ENCODE measurements at regions of chr5 and their contacts with region 1.

Region 1: DNA sequence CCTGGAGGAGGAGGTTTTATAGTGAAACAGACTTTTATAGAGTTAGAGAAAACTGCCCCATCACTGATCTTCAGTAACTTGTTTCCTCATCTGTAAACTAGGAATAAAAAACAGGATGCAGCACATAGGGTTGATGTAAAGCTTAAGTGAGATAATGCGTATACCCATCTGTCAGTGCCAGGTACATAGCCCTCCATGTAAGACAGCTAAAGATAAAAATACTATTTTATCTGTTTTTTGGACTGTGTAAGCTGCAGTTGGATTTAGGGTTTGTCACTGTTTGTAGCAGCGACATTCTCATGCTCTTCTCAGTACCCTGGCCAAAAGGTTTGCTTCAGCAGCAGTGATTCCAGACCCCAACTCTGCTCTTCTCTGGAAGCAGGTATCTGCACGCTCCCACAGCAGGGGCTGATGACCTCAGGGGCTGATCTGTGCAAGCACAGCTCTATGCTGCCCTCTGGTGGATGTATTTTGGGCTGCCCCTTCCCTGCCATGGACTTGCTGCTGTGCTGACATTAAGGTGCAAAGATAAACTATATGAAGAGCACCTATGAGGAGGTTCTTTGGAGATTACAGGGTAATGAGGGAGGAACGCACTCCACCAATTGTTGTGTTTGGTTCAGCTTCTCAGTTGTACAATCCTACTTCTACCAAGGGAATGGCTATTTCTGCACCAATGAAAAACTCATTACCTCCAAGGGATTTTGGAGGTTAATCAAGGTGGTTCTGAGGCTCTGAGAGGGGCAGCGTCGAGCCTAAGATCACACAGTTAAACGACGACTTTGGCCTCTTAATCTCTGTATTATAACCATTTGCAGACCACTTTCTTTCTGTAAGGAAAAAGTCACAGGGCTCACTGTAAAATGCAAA is 13.1 kb downstream of the HMHB1 start:
- DNase-seq: peak; percentile 71
- H3K4me3 ChIP-seq: peak overlapping the region in 1 of 2 experiments; percentile 12; a peak in 1 of 4 replicates
- H3K27ac ChIP-seq: no peak overlapping the region
- H3K4me1 ChIP-seq: peaks cover 0 to 19% of the 10 kb centered on the region in 2 experiments; a peak in 3 of 4 replicates
- H3K27me3 ChIP-seq: no peaks in the 10 kb centered on the region
- CTCF ChIP-seq: peak; percentile 94
- EP300 ChIP-seq: no peak
- RAD21 ChIP-seq: peak; percentile 96

Region 2: GRCh38 chr5:142922223-142922952 is 902.7 kb before region 1 on chr5:
- CTCF ChIA-PET with region 1: interaction called, 26 read pairs
- POLR2A ChIA-PET with region 1: no interaction called
- DNase-seq: peak; percentile 51
- H3K4me3 ChIP-seq: no peak overlapping the region
- H3K27ac ChIP-seq: no peak overlapping the region
- H3K4me1 ChIP-seq: peaks cover 3 to 11% of the 10 kb centered on the region in 2 experiments
- H3K27me3 ChIP-seq: no peaks in the 10 kb centered on the region
- CTCF ChIP-seq: peak; percentile 66
- EP300 ChIP-seq: no peak
- RAD21 ChIP-seq: peak; percentile 79

Region 3: DNA sequence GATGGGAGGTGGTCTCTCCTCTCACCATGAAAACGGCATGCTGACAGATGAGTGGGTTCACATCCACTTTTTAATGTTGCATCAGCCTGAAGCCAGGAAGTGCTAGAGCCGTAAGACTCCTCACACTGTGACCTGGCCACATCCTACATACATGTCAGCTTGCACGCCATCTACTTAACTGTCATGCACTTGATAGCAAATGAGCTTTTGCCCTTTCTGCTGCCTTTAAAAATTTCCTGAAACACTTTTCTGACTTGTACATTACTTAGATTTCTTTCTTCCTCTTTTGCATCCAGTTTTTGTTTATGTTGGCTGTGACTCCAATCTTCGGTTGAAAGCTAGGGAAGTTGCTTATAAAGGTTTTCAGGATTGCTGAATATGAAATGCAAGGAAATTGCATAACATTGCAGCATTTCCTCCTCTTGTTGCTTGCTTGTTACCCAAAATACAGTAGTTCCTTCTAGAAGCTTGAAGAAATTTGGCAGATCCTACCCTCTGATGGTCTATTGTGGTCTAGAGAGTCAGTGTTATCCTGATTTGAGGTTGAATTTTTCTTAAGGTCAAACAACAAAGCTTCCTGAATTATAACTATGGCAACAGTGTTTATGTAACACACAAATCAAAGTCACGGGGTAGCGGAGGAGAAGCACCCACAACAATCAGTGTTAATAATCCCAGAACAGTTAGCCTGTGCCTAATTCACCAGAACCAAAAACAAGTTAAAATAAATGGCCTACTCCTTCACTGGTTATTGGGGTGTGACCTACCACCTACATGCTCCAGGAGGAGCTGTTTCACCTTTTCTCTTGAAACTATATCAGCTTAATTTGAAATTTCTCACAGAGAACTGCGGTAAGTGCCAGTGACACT is 822.4 kb before region 1 on chr5:
- CTCF ChIA-PET with region 1: interaction called, 12 read pairs
- POLR2A ChIA-PET with region 1: no interaction called
- DNase-seq: no peak
- H3K4me3 ChIP-seq: no peak overlapping the region; a peak in 1 of 4 replicates
- H3K27ac ChIP-seq: peak overlapping the region; percentile 16 to 78; a peak in 3 of 4 replicates
- H3K4me1 ChIP-seq: peaks cover 0 to 20% of the 10 kb centered on the region in 2 experiments; a peak in 3 of 4 replicates
- H3K27me3 ChIP-seq: no peaks in the 10 kb centered on the region
- CTCF ChIP-seq: peak; percentile 68
- EP300 ChIP-seq: no peak
- RAD21 ChIP-seq: peak; percentile 63

Region 4: DNA sequence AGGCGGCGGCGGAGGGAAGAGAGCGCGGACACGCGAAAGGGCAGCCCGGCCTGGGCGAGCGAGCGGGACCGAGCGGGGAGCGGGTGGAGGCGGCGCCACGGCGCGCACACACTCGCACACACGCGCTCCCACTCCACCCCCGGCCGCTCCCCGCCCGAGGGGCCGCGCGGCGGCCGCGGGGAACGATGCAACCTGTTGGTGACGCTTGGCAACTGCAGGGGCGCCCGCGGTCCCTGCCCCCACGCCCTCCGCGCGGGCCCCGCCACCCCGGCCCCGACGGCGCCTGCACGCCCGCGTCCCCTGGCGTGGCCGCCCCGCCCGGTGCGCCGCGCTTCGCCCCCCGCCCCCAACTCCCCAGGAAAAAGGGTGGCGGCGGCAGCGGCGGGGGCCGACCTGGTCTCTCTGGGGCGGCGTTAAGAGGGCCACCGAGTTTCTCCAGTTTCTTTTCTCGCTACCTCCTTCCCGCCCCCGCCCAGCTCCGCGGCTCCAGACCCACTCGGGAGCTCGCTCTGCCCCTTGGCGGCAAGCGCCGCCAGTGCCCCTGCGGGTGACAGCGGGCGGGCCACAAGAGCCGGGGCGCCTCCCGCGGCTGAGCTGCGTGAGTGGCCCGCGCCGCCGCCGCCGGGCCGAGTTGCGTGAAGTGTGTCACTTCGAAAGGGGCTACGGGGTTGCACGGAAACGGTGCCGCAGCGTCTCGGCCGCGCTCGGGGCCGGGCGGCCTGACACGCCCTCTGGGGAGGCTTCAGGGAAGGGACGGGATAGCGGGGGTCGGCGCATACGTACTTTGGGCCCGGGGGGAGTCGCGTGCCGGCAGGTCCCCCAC is 421.3 kb before region 1 on chr5 and contains the start of gene NR3C1:
- CTCF ChIA-PET with region 1: interaction called, 32 read pairs
- POLR2A ChIA-PET with region 1: no interaction called
- DNase-seq: peak; percentile 88
- H3K4me3 ChIP-seq: peak within 1 kb of the TSS; percentile 83 to 90
- H3K27ac ChIP-seq: peak within 1 kb of the TSS; percentile 94 to 99
- H3K4me1 ChIP-seq: peaks cover 9 to 19% of the 10 kb centered on the region in 2 experiments; a peak in 3 of 4 replicates
- H3K27me3 ChIP-seq: no peaks in the 10 kb centered on the region
- CTCF ChIP-seq: peak; percentile 46
- EP300 ChIP-seq: no peak
- RAD21 ChIP-seq: peak; percentile 56
- polyA plus RNA-seq, gene NR3C1: 7.1 and 8.2 TPM in 2 replicates

Region 5: DNA sequence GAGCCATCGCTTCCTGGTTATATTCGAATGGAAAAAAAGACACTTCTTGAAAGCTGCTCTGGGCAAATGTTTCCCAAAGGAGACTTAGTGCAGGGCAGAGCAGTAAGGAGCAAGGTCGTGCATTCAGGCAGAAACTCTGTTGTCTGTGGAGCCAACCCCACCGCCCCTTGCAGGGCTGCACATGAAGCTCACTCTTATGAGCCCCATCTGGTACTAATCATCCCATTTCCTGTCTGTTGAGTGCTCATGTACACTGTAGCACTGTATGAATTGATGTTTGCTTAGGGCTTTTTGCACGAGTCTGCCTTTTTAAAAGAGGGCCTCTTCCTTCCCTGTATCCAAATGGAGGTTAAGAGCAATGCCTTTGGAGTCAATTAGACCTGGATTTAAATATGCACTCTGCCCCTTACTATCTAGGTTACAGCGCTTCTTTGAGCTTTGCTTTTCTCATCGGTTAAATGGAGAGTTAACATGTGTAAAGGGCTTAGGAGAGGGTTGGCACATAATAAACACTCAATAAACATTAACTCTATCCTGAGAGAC is 12.3 kb after region 1 on chr5:
- CTCF ChIA-PET with region 1: interaction called, 10 read pairs
- POLR2A ChIA-PET with region 1: no interaction called
- DNase-seq: peak; percentile 54
- H3K4me3 ChIP-seq: no peak overlapping the region
- H3K27ac ChIP-seq: peak overlapping the region; percentile 46 to 91; a peak in 3 of 4 replicates
- H3K4me1 ChIP-seq: peaks cover 9 to 12% of the 10 kb centered on the region in 2 experiments; a peak in 3 of 4 replicates
- H3K27me3 ChIP-seq: no peaks in the 10 kb centered on the region
- CTCF ChIP-seq: no peak
- EP300 ChIP-seq: 0 out of 4 replicates have a peak, but pooled peaks have one; percentile 14 to 23
- RAD21 ChIP-seq: 0 out of 2 replicates have a peak, but pooled peaks have one; percentile 12

Region 6: DNA sequence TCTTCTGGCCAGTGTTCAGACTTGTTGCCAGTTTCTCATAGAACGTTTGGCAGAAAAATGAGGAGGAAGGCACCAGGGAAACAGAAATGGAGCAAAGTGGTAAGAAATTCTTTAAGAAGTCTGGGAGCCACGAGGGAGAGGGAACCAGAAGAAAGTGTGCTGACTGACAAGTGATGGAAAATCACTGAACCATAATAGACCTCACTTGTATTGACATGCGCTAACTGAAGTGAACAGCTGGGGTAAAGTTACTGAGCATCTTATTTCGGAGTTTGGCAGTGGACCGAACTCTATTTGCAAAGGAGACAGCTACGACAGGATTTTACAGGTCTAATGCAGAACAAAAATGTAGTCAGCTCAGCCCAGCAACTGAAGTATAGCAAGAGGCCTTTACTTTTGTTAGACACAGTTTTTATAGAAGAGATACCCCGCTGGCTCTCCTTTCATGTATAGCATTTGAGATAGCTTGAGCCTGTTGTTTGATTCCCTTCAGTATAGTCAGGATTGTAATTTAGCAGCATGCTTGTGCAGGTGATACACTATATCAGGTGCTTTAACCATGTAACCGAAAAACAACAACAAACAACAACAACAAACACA is 40.4 kb after region 1 on chr5:
- CTCF ChIA-PET with region 1: no interaction called
- POLR2A ChIA-PET with region 1: no interaction called
- DNase-seq: no peak
- H3K4me3 ChIP-seq: no peak overlapping the region
- H3K27ac ChIP-seq: no peak overlapping the region
- H3K4me1 ChIP-seq: peaks cover 0 to 5% of the 10 kb centered on the region in 2 experiments; a peak in 1 of 4 replicates
- H3K27me3 ChIP-seq: no peaks in the 10 kb centered on the region
- CTCF ChIP-seq: no peak
- EP300 ChIP-seq: no peak
- RAD21 ChIP-seq: no peak

Region 7: DNA sequence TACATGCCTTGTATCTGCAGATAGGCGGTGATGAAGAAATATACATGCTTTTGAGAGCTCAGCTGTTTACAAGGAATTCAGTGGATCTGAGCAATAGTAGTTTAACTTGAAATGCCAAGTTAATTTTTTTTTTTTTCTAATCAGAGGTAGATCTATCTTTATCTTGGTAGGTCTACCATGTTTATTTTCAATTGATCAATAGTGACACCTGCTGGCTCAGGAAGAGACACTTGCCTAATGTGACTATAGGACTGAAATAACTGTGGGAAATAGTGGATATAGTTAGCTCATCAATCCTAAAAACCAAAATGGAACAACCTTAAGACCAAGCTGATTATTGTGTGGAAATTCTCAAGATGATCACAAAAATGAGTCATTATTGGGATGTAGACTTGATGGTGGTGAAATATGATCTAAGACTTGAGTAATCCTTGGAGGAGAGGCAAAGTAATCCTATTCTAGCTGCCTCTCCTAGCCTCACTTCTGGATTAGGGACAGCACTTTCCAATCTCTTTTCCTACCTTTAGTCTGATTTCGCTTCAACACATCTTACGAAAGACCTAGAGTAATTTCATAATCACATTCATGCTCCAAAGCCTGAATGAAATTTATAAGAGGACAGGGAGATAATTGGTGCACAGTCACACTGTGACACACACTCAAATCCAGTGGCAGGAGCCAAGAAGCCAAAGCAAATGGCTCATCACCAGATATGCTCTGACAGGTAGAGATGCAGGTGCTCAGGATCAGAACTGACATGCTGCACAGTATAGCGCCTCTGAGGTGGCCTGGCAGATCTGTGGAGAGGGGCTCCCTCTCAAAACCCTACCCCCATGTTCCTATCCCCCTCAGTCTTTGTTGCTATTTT is 143.2 kb after region 1 on chr5:
- CTCF ChIA-PET with region 1: interaction called, 10 read pairs
- POLR2A ChIA-PET with region 1: no interaction called
- DNase-seq: peak; percentile 37
- H3K4me3 ChIP-seq: no peak overlapping the region
- H3K27ac ChIP-seq: no peak overlapping the region
- H3K4me1 ChIP-seq: peaks cover 0 to 5% of the 10 kb centered on the region in 2 experiments; a peak in 2 of 4 replicates
- H3K27me3 ChIP-seq: no peaks in the 10 kb centered on the region
- CTCF ChIP-seq: peak; percentile 71
- EP300 ChIP-seq: no peak
- RAD21 ChIP-seq: peak; percentile 81

Region 8: GRCh38 chr5:144142139-144142823 is 317.2 kb after region 1 on chr5:
- CTCF ChIA-PET with region 1: interaction called, 11 read pairs
- POLR2A ChIA-PET with region 1: no interaction called
- DNase-seq: peak; percentile 36
- H3K4me3 ChIP-seq: no peak overlapping the region
- H3K27ac ChIP-seq: peak overlapping the region in 1 of 2 experiments; percentile 30; a peak in 1 of 4 replicates
- H3K4me1 ChIP-seq: peaks cover 0 to 3% of the 10 kb centered on the region in 2 experiments; a peak in 1 of 4 replicates
- H3K27me3 ChIP-seq: no peaks in the 10 kb centered on the region
- CTCF ChIP-seq: peak; percentile 83
- EP300 ChIP-seq: no peak
- RAD21 ChIP-seq: peak; percentile 90